ENCODE measurements at regions of chr3 and their contacts with region 1.

Region 1: GRCh38 chr3:184174646-184175492 is at the start of gene AP2M1:
- DNase-seq: peak; percentile 99
- H3K4me3 ChIP-seq: peak within 1 kb of the TSS; percentile 92
- H3K27me3 ChIP-seq: no peaks in the 10 kb centered on the region
- CTCF ChIP-seq: 0 out of 2 replicates have a peak, but pooled peaks have one; percentile 3
- polyA plus RNA-seq, gene AP2M1: 1,059 and 1,761 TPM in 2 replicates

Region 2: DNA sequence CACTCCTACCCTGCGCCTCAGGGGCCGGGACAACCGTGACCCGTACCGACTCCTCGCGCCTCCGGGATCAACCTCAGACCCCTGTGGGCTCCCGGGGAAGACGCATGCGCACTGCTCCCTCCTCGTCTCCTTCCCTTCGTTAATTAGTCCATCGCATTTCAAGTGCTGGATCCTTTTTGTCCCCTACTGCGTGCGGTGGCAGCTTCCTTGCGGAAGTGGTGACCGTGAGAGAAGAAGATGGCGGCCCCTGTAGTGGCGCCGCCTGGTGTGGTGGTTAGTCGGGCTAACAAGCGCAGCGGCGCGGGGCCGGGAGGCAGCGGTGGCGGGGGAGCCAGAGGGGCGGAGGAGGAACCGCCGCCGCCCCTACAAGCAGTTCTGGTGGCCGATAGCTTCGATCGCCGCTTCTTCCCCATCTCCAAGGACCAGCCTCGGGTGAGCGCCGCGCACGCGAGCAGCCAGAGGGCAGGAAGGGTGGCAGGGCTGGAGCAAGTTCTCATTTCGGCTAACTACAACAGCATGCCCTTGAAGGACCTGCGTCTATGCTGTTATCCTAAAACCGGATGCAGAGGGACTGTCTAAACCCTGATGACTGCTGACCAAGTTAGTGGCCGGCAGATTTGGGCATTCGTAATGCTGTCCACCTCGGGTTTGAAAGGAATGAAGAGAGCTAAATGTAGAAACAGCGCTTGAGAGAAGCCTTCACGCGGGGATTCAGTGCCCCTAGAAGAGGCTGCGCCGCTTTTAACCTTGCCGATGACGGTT is 39.5 kb before region 1 on chr3 and contains the start of gene EIF2B5:
- CTCF ChIA-PET with region 1: interaction called, 3 read pairs
- POLR2A ChIA-PET with region 1: interaction called, 11 read pairs
- DNase-seq: peak; percentile 77
- H3K4me3 ChIP-seq: peak within 1 kb of the TSS; percentile 85
- H3K27me3 ChIP-seq: no peaks in the 10 kb centered on the region
- CTCF ChIP-seq: peak; percentile 53
- polyA plus RNA-seq, gene EIF2B5: 31.0 and 32.9 TPM in 2 replicates

Region 3: DNA sequence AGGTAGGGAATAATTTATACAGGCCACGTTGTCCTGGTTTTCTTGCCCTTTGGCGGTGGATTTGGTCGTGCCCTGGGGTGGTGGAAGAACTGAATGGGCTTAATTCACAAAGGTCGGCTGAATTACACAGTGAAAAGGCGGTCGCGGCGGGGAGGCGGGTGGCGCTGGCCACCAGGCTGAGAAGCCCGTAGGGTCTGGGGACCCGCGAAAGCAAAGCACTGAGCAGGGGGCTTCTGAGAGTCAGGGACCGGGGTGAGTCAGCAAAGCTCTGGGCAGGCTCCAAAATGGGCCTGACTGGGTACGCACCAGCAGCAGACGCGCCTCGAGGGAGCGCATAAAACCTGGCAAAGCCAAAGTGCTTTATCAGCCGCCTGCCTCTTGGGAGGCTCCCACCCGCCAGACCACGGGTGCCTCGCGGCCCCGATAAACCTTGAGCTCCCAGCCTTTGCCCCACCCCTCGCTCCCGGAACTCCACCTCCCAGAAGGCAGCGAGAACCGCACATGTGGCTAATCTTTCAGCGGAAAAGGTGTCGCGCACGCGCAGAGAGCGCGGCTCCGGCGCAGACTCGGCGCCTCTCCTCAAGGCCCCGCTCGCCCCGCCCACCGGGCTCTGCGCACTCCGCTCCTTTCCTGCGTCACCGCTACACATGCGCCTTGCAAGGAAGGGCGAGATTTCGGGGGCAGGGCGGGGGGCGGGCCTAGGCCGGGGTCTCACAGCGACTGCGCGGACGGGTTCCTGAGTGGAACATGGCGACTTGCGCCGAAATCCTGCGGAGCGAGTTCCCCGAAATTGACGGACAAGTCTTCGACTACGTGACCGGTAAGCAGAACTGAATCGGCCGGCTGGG is 10.8 kb after region 1 on chr3 and contains the start of gene ABCF3:
- CTCF ChIA-PET with region 1: interaction called, 3 read pairs
- POLR2A ChIA-PET with region 1: interaction called, 20 read pairs
- DNase-seq: peak; percentile 95
- H3K4me3 ChIP-seq: peak within 1 kb of the TSS; percentile 89
- H3K27me3 ChIP-seq: no peaks in the 10 kb centered on the region
- CTCF ChIP-seq: no peak
- polyA plus RNA-seq, gene ABCF3: 65.2 and 82.8 TPM in 2 replicates

Region 4: DNA sequence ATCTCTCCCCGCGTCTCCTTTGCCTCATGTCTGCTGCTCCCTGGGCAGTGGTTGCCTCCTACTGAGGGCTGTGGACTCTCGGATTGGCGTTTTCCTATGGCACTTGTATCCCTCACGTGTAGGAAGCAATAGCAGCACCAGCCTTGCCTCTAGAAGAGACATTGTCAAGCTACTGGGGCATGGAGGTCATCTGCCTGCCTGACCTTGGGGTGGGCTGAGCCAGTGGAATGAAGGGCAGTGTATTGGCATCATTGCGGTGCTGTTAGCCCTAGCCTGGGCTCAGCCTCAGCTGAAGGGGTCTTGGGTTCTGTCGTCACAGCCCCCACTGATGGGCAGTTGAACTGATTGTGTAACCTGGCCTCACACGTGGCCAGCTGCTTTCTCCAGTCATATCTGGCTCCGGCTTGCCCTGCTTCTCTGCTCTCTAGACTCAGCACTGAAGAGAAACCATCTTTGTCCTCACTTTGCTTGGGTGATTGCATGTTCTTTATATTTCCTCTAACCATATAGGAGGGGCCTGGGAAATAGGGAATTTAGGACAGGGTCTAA is 19.2 kb after region 1 on chr3:
- CTCF ChIA-PET with region 1: no interaction called
- POLR2A ChIA-PET with region 1: interaction called, 15 read pairs
- DNase-seq: no peak
- H3K4me3 ChIP-seq: no peak overlapping the region
- H3K27me3 ChIP-seq: no peaks in the 10 kb centered on the region
- CTCF ChIP-seq: no peak